GM12878 (cell line): ENCODE measurements at regions of chr6 and their contacts with region 1.

Region 1: GRCh38 chr6:12450467-12450866 is 160.3 kb downstream of the EDN1 start:
- DNase-seq: no peak
- ATAC-seq: peak; percentile 35; the same call in 2 of the 3 replicates
- H3K4me3 ChIP-seq: no peak overlapping the region
- H3K27ac ChIP-seq: no peak overlapping the region
- H3K4me1 ChIP-seq: no peaks in the 10 kb centered on the region
- H3K27me3 ChIP-seq: no peaks in the 10 kb centered on the region
- CTCF ChIP-seq: no peak
- EP300 ChIP-seq: no peak
- POLR2A ChIP-seq: no peak
- RAD21 ChIP-seq: no peak

Region 2: DNA sequence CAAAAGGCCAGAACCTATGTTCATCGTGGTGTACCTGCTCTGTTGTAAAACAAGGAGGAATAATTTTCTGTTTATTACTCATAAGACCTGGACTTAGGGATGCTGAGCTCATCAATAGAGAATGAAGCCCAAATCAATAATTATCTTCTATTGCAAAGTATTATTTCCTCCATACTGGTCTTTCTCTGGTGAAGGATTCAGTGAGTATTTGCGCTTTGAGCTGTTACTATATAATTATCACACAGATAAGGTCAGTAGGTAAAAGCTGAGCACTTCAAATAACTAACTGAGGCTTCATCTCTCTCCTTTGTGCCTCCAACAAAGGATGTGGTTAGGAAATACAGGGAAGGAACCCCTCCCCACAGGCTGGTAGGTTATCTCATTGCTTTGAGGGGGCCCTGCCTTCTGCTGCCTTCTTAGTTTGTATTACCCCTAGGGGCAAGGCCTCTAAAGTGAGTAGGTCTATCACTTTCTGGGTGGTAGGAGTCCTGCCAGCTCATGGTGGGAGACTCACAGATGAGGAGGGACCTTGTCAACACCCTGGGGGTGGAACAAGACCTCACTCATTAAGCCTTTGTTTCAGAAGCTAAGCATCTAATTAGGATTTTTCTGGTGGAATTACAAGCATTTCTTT is 125.8 kb before region 1 on chr6:
- CTCF ChIA-PET with region 1: no interaction called
- POLR2A ChIA-PET with region 1: no interaction called
- RAD21 ChIA-PET with region 1: no interaction called
- SMC1A ChIA-PET with region 1: no interaction called
- in situ Hi-C with region 1: no loop called
- intact Hi-C with region 1: no loop called
- DNase-seq: no peak
- ATAC-seq: no peak
- H3K4me3 ChIP-seq: no peak overlapping the region
- H3K27ac ChIP-seq: no peak overlapping the region
- H3K4me1 ChIP-seq: no peaks in the 10 kb centered on the region
- H3K27me3 ChIP-seq: no peaks in the 10 kb centered on the region
- CTCF ChIP-seq: no peak
- EP300 ChIP-seq: no peak
- POLR2A ChIP-seq: no peak
- RAD21 ChIP-seq: no peak

Region 3: GRCh38 chr6:12420626-12421025 is 29.8 kb before region 1 on chr6:
- CTCF ChIA-PET with region 1: no interaction called
- POLR2A ChIA-PET with region 1: no interaction called
- RAD21 ChIA-PET with region 1: no interaction called
- SMC1A ChIA-PET with region 1: no interaction called
- in situ Hi-C with region 1: no loop called
- intact Hi-C with region 1: loop called (anchors 1 kb)
- DNase-seq: no peak
- ATAC-seq: no peak
- H3K4me3 ChIP-seq: no peak overlapping the region
- H3K27ac ChIP-seq: no peak overlapping the region
- H3K4me1 ChIP-seq: no peaks in the 10 kb centered on the region
- H3K27me3 ChIP-seq: no peaks in the 10 kb centered on the region
- CTCF ChIP-seq: no peak
- EP300 ChIP-seq: no peak
- POLR2A ChIP-seq: no peak
- RAD21 ChIP-seq: no peak